Body of pancreas (tissue), 4 donors: ENCODE measurements at regions of chr6 and their contacts with region 1.

Region 1: DNA sequence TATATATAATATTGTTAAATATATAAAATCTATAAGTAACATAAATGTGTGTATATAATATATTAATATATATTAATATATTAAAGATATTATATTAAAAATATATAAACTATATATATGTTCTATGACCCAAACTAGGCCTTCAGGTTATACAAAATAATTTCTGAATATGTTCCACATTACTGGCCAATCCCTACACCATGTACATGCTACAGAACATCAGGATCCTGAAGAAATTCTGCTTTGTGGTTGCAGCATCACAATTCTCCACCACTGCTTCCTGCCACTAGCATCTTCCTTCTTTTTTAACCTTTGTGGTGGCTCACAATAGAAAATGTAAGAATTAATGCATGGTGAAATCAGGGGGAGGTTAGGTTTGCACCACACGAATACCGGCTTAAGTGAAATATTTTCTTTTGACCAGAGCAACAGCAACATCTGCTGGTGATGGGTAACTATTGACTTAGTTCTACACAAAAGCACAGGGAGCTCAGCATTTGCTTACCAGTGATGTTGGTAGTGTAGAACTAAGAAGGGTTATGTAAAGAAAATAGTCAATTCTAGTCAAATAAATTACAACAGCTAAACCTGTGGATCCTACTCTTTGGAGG is 280.6 kb downstream of the SYNE1 start:
- DNase-seq: no peak
- ATAC-seq: no peak
- H3K4me3 ChIP-seq: no peak overlapping the region
- H3K27ac ChIP-seq: no peak overlapping the region
- H3K4me1 ChIP-seq: no peaks in the 10 kb centered on the region
- H3K27me3 ChIP-seq: no peaks in the 10 kb centered on the region
- CTCF ChIP-seq: peak in 1 of 7 experiments; percentile 6
- POLR2A ChIP-seq: no peak

Region 2: DNA sequence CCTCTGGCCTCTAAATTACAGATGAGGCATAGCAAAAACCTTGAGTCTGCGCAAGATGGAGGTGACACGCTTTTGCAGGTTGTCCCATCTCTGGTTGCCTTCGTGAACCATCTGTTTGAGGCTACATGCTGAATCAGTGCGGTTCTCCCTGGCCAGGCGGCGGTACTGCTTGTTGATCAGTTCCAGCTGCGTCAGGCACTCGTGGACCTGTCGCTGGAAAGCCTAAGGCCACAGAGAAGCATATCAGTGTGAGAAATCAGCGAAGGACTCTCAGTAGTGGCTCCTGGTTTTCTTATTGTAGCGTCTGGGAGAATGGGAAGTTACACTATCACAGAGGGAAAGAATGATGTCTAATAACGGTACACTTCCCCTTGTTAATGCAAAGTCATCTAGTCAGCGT is 204.6 kb before region 1 on chr6:
- intact Hi-C with region 1: loop called (anchors 10 kb)
- DNase-seq: no peak
- ATAC-seq: no peak
- H3K4me3 ChIP-seq: no peak overlapping the region
- H3K27ac ChIP-seq: no peak overlapping the region
- H3K4me1 ChIP-seq: no peaks in the 10 kb centered on the region
- H3K27me3 ChIP-seq: no peaks in the 10 kb centered on the region
- CTCF ChIP-seq: no peak
- POLR2A ChIP-seq: no peak

Region 3: GRCh38 chr6:152701081-152701862 is 344.7 kb after region 1 on chr6:
- intact Hi-C with region 1: no loop called
- DNase-seq: no peak
- ATAC-seq: no peak
- H3K4me3 ChIP-seq: no peak overlapping the region
- H3K27ac ChIP-seq: no peak overlapping the region
- H3K4me1 ChIP-seq: no peaks in the 10 kb centered on the region
- H3K27me3 ChIP-seq: no peaks in the 10 kb centered on the region
- CTCF ChIP-seq: no peak
- POLR2A ChIP-seq: no peak